ENCODE measurements at regions of chr6 and their contacts with region 1.

Region 1: GRCh38 chr6:138428944-138429598 is 25.0 kb downstream of the HEBP2 start:
- H3K4me3 Mint-ChIP-seq: no peak overlapping the region
- H3K27ac Mint-ChIP-seq: no peak overlapping the region
- H3K4me1 Mint-ChIP-seq: peaks cover 43% of the 10 kb centered on the region
- H3K27me3 Mint-ChIP-seq: peaks cover 2% of the 10 kb centered on the region

Region 2: DNA sequence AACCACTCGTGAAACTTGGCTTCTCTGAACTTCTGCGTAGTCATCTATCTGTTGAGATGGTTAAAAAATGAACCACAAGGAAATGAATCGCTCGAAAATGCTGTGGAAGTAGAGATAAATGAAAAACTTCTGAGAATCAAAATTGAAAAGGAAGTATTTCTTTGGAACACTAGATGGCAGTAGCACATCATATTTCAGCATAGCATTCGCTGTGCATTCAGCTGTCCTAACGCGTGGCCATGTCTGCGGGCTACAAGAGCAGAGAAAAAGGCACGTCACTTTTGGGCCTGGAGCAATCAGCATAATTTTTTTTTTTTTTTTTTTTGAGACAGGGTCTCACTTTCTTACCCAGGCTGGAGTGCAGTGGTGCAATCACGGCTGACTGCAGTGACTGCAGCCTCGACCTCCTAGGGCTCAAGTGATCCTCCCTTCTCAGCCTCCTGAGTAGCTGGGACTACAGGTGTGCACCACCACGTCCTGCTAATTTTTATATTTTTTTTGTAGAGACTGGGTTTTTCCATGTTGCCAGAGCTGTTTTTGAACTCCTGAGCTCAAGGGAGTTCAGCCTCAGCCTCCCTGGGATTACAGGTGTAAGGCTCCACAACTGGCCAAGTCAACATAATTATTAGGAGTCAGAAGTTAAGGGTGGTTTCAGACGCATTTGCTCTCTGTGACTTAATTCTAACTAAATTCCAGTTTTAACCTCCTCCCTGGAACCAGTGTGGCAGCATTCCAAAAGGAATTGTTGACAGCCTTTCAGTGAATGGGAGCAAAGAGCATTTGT is 313.0 kb before region 1 on chr6:
- intact Hi-C with region 1: loop called (anchors 10 kb)
- H3K4me3 Mint-ChIP-seq: no peak overlapping the region
- H3K27ac Mint-ChIP-seq: no peak overlapping the region
- H3K4me1 Mint-ChIP-seq: peaks cover 7% of the 10 kb centered on the region
- H3K27me3 Mint-ChIP-seq: peaks cover 26% of the 10 kb centered on the region

Region 3: DNA sequence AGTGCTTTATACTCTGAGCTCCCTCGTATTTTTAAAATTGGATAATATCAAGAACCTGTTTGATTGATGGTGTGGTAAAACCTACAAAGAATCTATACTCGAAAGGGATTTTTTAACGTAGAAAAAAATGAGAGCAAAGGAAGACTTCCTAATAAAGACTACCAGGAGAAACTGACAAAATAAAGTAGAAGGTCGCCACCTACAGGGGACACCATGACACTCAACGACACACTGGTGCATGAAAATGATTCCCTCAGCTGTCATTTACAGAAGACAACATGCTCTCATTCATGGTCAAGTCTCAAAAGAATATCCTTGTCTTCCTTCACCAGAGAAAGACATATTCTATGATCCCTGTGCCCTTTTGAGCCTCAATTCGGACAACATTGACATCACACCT is 80.3 kb after region 1 on chr6:
- intact Hi-C with region 1: loop called (anchors 1 kb)
- H3K4me3 Mint-ChIP-seq: no peak overlapping the region
- H3K27ac Mint-ChIP-seq: no peak overlapping the region
- H3K4me1 Mint-ChIP-seq: peaks cover 8% of the 10 kb centered on the region
- H3K27me3 Mint-ChIP-seq: no peaks in the 10 kb centered on the region

Region 4: DNA sequence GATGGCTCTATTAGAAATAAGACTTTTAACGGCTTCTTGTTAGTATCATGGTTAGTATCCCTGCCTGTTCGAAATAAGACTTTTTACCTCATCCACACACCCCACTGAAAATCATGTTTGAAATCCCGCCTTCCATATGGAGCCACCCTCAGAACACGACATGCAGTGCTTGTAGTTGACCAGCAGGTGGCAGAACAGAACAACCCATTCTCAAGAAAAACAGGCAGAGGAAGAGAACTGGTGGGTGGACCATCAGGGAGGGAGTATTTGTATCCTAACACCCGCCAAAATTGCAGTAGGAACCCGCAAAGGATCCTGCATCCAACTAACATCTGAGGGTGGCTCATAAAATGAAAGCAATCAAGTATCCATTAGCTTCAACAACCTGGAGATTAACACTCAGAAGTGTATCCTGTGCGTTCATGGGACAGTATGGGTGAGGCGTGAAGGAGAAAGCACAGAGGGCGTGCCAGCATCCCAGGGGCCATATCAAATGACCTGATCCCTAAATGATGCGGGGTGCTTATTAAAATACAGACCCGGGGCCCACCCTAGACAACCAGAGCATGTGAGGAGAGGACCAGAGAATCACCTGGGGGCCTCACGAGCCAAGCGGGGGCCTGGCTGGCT is 159.8 kb after region 1 on chr6:
- intact Hi-C with region 1: loop called (anchors 5 kb)
- H3K4me3 Mint-ChIP-seq: no peak overlapping the region
- H3K27ac Mint-ChIP-seq: no peak overlapping the region
- H3K4me1 Mint-ChIP-seq: peaks cover 42% of the 10 kb centered on the region
- H3K27me3 Mint-ChIP-seq: peaks cover 13% of the 10 kb centered on the region